ENCODE measurements at regions of chr2 and their contacts with region 1.

Region 1: DNA sequence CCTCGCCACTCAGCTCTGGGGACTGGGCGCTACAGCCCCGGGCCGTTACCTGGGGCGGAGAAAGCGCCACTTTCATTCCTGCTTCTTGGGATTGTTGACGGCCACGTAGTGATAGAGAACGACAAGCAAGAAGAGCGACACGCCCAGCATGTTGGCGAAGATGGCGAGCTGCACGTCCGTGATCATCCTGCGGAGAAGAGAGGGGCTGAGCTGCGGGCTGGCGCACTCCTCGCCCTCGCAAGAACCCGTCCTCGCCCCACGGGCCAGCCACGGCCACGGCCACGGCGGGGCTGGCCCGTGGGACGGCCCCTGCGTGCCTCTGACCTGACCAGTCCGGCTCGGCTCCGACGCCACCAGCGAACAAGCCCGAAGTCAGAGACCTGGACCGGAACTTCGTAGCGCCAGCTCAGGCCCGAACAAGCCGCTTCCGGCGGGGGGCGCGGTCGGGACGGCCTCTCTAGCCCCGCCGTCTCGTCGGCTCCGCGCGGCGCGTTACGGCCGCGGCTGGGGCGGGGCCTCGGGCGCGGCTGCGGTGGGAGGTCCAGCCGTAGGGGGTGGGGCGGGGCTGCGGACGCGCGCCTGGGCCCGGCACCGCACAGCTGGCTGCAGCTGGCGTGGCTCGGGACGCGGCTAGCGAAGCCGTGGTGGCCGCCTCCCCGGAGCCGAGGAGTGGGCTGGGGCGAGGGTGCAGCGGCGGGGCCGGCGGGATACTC is at the start of gene OST4:
- DNase-seq: peak; percentile 97
- CTCF ChIP-seq: no peak

Region 2: DNA sequence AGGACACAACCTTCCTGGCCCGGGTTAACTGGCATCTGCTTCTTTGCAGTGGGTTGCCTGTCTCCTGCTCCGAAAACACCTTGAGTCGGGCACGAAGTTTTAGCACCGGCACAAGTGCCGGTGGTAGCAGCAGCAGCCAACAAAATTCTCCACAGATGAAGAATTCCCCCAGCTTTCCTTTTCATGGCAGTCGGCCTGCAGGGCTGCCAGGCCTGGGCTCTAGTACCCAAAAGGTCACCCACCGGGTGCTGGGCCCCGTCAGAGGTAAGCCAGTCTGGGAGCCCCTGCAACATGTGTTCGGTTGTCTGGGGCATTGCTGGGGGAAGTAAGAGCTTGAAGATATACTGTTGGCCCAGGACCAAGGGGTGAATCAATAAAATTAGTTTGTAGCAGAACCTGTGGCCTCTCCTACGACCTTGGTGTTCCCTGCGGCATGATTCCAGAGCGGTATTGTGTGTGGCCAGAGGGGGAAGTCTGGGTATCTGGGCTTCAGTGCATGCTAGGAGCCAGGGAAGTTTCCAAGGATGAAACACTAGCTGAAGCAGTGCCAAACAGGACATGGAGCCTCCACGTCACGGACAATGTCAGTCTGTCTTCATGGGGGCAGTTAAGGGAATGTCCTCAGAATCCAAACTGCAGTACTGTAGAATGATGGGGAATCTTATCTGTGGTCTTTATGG is 12.2 kb before region 1 on chr2:
- CTCF ChIA-PET with region 1: interaction called, 16 read pairs
- POLR2A ChIA-PET with region 1: interaction called, 12 read pairs
- DNase-seq: no peak
- CTCF ChIP-seq: no peak

Region 3: DNA sequence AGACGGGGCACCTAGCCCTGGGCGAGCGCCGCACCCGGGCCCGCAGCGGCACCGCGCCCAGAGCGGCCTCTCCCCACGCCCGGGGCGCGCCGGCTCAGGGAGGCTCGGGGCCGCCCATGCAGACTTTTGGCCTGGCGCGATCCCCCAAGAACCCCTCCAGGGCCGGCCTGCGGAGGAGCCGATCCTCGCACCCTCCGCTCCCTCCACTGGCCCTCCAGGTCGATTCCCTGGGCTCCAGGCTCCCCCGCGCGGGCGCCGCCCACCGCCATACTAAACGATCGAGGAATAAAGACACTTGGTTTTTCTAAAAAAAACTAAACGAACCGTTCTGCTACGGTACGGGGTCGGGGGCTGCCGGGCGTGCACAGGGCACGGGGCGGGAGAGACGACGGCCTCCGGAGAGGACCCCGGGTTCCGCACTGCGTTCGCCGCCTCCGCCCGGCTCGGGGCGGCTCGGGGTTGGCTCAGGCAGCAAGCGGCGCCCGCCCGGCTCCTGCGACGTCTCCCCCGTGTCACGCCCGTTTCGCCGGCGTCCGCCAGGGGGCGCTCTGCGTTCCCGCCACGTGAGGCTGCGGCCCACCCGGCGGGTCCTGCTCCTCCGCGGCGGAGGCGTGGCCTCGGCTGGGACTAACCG is 14.8 kb after region 1 on chr2:
- CTCF ChIA-PET with region 1: interaction called, 42 read pairs
- POLR2A ChIA-PET with region 1: interaction called, 5 read pairs
- DNase-seq: peak; percentile 99
- CTCF ChIP-seq: peak; percentile 94